ENCODE measurements at regions of chr3 and their contacts with region 1.

Region 1: DNA sequence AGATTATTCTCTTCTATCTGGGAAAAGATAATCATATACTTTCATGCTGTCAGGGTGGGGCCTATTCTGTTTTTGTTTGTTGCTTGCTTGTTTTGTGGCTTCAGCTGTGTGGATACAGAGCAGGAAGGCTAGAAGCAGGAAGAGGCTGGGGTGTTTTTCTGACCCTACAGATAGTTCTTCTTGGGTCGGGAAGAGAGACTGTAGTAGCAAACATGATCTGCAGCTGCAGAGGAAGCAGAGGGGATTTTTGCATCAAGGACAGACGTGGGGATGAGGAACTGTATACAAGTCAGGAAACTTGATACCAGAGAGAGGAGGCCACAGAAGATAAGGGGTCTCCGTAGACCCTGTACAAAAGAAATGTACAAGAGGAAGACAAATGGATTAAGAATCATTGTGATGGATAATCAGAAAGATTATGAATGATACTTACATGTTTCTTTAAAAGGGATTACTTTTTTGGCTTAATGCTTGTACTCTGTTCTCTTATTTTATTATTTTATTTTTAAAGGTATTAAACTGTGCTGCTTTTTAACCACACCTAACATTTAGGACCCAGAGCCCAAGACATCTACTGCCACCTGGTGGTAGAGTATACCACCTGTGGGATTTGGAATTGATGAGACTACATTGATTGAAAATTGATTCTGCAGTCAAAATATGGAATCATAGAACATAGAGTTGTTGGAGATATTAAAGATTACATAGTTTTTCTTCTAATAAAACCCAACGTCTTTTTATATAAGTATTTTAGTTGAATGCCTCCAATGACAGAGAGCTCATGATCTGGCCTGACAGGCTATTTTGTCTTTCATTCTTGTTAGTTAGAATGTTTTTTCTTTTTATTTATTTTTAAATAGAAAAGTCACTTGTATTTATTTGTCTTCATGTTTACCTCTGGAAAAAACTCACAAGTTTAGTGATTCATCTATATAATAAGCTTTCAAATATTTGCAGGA is 87.3 kb upstream of the ROPN1 start:
- DNase-seq: no peak
- H3K4me3 ChIP-seq: no peak overlapping the region
- H3K27ac ChIP-seq: no peak overlapping the region
- H3K4me1 ChIP-seq: no peaks in the 10 kb centered on the region
- H3K27me3 ChIP-seq: no peaks in the 10 kb centered on the region
- CTCF ChIP-seq: peak in 2 of 3 experiments; percentile 59 to 77; a peak in 3 of 4 replicates
- EP300 ChIP-seq: no peak
- POLR2A ChIP-seq: no peak
- RAD21 ChIP-seq: peak; percentile 77 to 80

Region 2: DNA sequence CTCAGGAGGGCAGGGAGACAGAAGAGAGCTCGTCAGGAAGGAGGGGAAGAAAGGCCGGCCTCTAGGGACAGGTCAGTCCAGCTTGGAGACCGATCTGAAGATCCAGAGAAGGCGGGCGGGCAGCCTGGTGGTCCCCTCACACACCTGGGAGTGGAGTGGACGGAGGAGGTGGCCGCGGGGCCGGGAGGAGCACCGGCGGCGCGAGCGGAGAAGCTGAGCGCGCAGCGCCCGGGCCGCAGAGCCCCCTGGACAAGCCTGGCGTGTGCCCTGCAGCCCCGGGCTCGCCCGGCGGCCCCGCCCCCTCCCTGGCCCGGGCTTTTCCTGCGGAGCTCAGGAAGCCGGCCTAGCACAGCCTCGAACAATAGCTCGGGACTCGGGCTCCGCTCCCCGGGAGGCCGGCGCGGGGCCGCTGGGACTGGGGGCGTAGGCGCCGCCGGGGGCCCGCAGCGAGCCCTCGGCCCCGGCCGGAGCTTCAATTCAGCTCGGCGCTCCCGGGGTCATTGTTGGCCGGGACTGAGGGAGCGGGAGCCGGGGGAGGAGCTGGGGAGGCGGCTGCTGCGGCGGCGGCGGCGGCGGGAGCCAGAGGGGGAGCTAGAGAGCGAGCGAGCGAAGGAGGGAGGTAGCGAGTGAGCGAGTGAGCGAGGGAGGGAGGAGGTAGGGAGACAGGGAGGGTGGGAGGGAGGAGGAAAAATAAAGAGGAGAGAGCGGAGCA is 46.4 kb before region 1 on chr3:
- CTCF ChIA-PET with region 1: interaction called, 14 read pairs
- POLR2A ChIA-PET with region 1: interaction called, 3 read pairs
- DNase-seq: peak; percentile 44 to 95
- H3K4me3 ChIP-seq: peak overlapping the region; percentile 68 to 98 (median 86)
- H3K27ac ChIP-seq: peak overlapping the region; percentile 30; the same call in 1 of the 2 replicates
- H3K4me1 ChIP-seq: peaks cover 0 to 7% (median 2%) of the 10 kb centered on the region in 4 experiments; a peak in 3 of 7 replicates
- H3K27me3 ChIP-seq: peaks cover 12 to 39% (median 36%) of the 10 kb centered on the region in 4 experiments
- CTCF ChIP-seq: peak; percentile 39 to 63 (median 48)
- EP300 ChIP-seq: peak in 1 of 2 experiments; percentile 86; a peak in 1 of 3 replicates
- POLR2A ChIP-seq: peak; percentile 39 to 65; a peak in 2 of 3 replicates
- RAD21 ChIP-seq: peak in 1 of 2 experiments; percentile 27; a peak in 2 of 4 replicates

Region 3: DNA sequence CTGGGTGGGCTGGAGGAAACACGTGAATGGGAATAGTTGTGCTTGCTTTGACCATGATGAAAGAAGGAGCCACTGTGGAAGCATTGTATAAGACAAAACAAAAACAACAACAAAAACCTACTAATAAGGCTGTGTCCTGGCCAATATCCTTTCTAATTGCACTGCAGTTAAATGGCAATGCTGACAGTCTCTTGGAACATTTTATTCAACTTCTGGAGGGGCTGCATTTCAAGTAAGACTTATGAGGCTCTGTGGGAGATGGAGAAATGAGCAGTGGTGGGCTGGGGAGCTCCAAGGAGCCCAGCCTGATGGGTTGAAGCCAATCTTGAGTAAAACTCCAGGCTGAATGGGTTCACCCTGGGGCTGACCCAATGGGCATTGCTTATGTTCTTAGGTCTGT is 12.5 kb after region 1 on chr3:
- CTCF ChIA-PET with region 1: interaction called, 48 read pairs
- POLR2A ChIA-PET with region 1: no interaction called
- DNase-seq: no peak
- H3K4me3 ChIP-seq: no peak overlapping the region
- H3K27ac ChIP-seq: no peak overlapping the region
- H3K4me1 ChIP-seq: no peaks in the 10 kb centered on the region; a peak in 1 of 7 replicates
- H3K27me3 ChIP-seq: no peaks in the 10 kb centered on the region
- CTCF ChIP-seq: no peak
- EP300 ChIP-seq: no peak
- POLR2A ChIP-seq: no peak
- RAD21 ChIP-seq: no peak

Region 4: DNA sequence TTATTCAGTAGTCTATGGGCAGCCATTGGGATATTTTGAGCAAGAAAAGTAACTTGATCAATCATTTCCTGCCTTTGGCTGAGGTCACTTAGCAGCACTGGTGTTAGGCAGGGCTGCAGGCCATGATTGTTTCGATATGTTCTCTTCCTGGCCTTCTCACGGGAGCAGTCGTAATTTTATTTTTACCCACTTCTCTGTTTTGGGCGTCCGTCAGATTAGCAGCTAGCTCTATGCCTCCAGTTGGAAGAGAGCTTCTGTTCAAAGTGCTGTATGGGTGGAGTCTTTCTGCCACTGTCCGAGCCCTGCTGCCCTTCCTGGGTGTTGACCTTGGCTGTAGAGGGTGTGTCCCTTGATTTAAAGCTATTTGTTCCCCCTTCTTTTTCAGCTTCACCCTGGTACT is 36.0 kb after region 1 on chr3:
- CTCF ChIA-PET with region 1: interaction called, 13 read pairs
- POLR2A ChIA-PET with region 1: no interaction called
- DNase-seq: no peak
- H3K4me3 ChIP-seq: no peak overlapping the region
- H3K27ac ChIP-seq: no peak overlapping the region
- H3K4me1 ChIP-seq: no peaks in the 10 kb centered on the region
- H3K27me3 ChIP-seq: no peaks in the 10 kb centered on the region
- CTCF ChIP-seq: no peak
- EP300 ChIP-seq: no peak
- POLR2A ChIP-seq: no peak
- RAD21 ChIP-seq: no peak

Measured in H1 (cell line).